Activated T-helper 2 cell treated with anti-CD3 and anti-CD28 coated beads, Interferon-gamma antibody, Interleukin-2, Interleukin-4, amounts not matched to agents 10 μg/mL and 5 μg/mL and 100 μg/mL, durations not matched to agents 14 hours and 24 hours and 36 hours (primary cell): ENCODE measurements at regions of chr7 and their contacts with region 1.

Region 1: DNA sequence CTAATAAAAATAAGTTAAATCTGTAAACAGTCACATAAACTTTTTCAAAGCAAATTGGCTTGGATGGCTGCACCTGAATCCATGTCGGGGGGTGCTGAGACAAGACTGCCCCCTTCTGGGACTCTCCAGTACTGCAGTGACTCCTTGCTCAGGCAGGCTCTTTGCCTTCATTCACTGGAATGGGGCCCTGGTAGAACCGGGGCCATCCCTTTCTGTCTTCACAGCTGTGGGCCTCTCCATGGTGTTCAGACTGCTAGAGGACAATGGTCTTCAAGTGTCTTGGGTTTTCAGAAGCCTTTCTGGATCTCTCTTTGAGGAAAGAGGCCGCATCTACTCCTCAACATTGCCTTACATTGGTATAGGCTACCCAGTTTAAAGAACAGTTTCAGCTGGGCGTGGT is 16.1 kb upstream of the IMPDH1 start:
- DNase-seq: peak; percentile 66
- H3K4me3 Mint-ChIP-seq: no peak overlapping the region
- H3K27ac Mint-ChIP-seq: no peak overlapping the region
- H3K4me1 Mint-ChIP-seq: peaks cover 16% of the 10 kb centered on the region
- H3K27me3 Mint-ChIP-seq: no peaks in the 10 kb centered on the region

Region 2: GRCh38 chr7:128361411-128362379 is 64.2 kb before region 1 on chr7 and contains the start of gene PRRT4:
- intact Hi-C with region 1: no loop called
- DNase-seq: peak; percentile 26
- H3K4me3 Mint-ChIP-seq: peak within 1 kb of the TSS; percentile 73
- H3K27ac Mint-ChIP-seq: peak within 1 kb of the TSS; percentile 42
- H3K4me1 Mint-ChIP-seq: peaks cover 22% of the 10 kb centered on the region
- H3K27me3 Mint-ChIP-seq: peaks cover 69% of the 10 kb centered on the region
- total RNA-seq, gene PRRT4: 0.39 and 0.55 TPM in 2 replicates

Region 3: DNA sequence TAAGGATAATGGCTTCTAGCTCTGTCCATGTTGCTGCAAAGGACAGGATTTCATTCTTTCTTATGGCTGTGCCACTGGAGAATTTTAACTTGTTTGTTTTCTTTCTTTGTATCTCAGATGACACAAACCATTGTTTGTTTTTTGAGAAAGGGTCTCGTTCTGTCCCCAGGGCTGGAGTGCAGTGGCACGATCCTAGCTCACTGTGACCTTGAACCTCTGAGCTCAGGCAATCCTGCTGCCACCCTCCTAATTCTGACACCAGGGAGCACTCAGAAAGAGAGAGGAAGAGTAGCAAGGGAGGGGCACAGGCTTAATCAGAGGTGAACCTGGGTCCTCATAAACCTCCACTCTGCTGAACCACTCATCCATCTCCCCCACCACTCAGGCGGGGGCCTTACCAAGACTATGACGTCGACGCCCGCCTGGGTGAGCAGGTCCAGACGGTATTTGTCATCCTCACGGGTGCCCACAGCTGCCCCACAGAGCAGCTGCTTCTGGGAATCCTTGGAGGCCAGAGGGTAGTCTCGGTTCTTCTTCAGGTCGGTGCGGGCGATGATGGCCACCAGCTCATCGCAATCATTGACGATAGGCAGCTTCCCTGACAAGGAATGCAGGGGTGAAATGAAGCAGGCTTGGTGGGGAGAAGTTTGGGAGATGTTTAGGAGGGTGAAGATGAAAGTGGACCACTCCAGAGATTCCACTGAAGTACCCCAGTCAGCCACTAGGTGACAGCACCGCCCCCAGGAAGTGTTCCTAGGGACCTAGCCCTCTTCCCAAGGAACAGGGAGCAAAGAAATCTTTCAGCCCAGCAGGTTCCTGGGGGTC is 27.6 kb before region 1 on chr7:
- intact Hi-C with region 1: loop called (anchors 1 kb)
- DNase-seq: no peak
- H3K4me3 Mint-ChIP-seq: no peak overlapping the region
- H3K27ac Mint-ChIP-seq: no peak overlapping the region
- H3K4me1 Mint-ChIP-seq: peaks cover 5% of the 10 kb centered on the region
- H3K27me3 Mint-ChIP-seq: no peaks in the 10 kb centered on the region

Region 4: GRCh38 chr7:128409596-128410160 is 16.2 kb before region 1 on chr7 and contains the start of gene IMPDH1:
- intact Hi-C with region 1: loop called (anchors 2 kb)
- DNase-seq: peak; percentile 80
- H3K4me3 Mint-ChIP-seq: peak within 1 kb of the TSS; percentile 89
- H3K27ac Mint-ChIP-seq: peak within 1 kb of the TSS; percentile 81
- H3K4me1 Mint-ChIP-seq: peaks cover 29% of the 10 kb centered on the region
- H3K27me3 Mint-ChIP-seq: peaks cover 14% of the 10 kb centered on the region
- total RNA-seq, gene IMPDH1: 108 and 112 TPM in 2 replicates

Region 5: DNA sequence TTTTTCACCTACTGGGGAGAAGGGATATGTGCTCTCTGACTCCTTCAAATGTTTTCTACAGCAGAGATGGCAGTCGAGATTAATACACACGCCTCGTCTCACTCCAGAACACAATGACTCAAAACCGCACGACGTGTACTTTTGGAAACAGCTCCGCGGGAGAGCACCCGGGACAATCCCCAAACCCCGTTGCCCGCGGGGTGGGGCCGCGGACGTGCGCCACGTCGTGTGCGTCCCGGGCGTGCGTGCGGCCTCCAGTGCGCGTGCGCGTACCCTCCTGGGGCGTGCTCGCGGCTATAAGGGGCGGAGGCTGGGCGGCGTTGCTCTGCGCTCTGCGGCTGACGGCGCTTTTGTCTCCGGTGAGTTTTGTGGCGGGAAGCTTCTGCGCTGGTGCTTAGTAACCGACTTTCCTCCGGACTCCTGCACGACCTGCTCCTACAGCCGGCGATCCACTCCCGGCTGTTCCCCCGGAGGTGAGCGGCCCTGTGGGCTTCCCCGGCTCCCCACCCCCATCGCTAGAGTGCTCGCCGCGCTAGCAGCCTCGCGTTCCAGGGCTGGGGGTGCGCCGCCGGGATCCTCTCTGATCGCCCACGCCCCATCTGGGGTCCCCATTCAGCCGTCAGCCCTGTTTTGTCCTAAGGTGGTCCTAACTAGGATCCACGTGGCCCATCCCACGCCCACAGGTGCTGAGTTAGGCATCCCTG is 29.9 kb after region 1 on chr7 and contains the start of gene HILPDA:
- intact Hi-C with region 1: loop called (anchors 1 kb)
- DNase-seq: peak; percentile 95
- H3K4me3 Mint-ChIP-seq: peak within 1 kb of the TSS; percentile 88
- H3K27ac Mint-ChIP-seq: peak within 1 kb of the TSS; percentile 99
- H3K4me1 Mint-ChIP-seq: peaks cover 64% of the 10 kb centered on the region
- H3K27me3 Mint-ChIP-seq: no peaks in the 10 kb centered on the region
- total RNA-seq, gene HILPDA: 406 and 416 TPM in 2 replicates

Region 6: DNA sequence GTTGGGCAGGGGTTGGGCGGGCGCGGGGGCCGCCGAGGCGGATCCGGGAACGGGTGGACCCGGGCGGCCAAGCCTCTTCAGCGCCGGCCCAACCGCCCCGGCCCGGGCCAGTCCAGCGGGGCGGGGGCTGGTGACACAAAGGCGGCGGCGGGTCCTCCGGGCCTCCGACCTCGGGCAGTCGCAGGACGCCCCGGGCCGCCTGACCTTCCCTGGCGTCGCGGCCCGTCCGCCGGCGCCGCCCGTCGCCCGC is 104.9 kb after region 1 on chr7:
- intact Hi-C with region 1: loop called (anchors 10 kb)
- DNase-seq: no peak
- H3K4me3 Mint-ChIP-seq: no peak overlapping the region
- H3K27ac Mint-ChIP-seq: no peak overlapping the region
- H3K4me1 Mint-ChIP-seq: peaks cover 24% of the 10 kb centered on the region
- H3K27me3 Mint-ChIP-seq: no peaks in the 10 kb centered on the region

Region 7: DNA sequence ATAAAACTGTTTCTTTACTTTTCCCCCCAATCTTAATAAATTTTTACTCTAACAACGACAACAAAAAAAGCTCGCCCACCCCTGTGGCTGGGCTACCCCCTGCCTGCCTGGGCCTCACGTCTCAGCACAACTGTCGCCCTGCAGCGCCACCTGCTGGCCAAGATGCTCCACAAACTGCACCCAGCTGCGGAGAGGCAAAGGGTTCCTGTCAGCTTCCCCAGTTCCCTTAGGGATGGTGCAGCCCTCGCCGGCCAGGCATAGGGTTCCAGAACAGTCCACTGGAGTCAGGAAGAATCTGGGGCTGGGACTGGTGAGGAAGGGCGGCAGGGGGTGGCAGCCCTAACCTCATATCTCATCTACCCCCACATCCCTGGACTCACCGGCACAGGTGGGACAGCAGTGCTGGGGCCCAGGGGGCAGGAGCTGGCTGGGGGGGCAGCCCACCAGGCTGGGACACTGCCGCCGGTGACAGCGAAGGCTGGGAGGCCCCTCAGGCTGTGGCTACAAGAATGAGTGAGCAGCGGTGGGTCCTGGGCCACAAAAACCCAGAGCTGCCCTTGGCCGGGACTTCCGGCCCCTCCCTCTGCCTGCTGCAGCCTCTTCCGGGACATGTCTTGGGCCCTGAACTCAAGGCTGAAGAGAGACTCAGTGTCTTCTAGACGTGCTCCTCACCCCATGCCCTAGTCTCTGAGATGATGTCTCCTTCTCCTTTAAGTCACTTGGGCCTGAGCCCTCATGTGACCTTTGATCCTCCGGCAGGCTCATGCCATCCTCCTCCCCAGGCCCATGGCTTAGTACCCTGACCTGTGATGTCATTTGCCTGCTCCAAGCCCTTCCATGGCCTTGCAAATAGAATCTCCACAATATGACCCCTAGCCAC is 458.0 kb after region 1 on chr7:
- intact Hi-C with region 1: loop called (anchors 10 kb)
- DNase-seq: peak; percentile 69
- H3K4me3 Mint-ChIP-seq: no peak overlapping the region
- H3K27ac Mint-ChIP-seq: no peak overlapping the region
- H3K4me1 Mint-ChIP-seq: no peaks in the 10 kb centered on the region
- H3K27me3 Mint-ChIP-seq: peaks cover 2% of the 10 kb centered on the region